ENCODE measurements at regions of chr9 and their contacts with region 1.

Region 1: GRCh38 chr9:31185831-31186230 is 1198.6 kb upstream of the ACO1 start:
- DNase-seq: no peak
- ATAC-seq: no peak
- H3K4me3 Mint-ChIP-seq: no peak overlapping the region
- H3K27ac Mint-ChIP-seq: no peak overlapping the region
- H3K4me1 Mint-ChIP-seq: no peaks in the 10 kb centered on the region
- H3K27me3 Mint-ChIP-seq: no peaks in the 10 kb centered on the region
- CTCF ChIP-seq: no peak

Region 2: DNA sequence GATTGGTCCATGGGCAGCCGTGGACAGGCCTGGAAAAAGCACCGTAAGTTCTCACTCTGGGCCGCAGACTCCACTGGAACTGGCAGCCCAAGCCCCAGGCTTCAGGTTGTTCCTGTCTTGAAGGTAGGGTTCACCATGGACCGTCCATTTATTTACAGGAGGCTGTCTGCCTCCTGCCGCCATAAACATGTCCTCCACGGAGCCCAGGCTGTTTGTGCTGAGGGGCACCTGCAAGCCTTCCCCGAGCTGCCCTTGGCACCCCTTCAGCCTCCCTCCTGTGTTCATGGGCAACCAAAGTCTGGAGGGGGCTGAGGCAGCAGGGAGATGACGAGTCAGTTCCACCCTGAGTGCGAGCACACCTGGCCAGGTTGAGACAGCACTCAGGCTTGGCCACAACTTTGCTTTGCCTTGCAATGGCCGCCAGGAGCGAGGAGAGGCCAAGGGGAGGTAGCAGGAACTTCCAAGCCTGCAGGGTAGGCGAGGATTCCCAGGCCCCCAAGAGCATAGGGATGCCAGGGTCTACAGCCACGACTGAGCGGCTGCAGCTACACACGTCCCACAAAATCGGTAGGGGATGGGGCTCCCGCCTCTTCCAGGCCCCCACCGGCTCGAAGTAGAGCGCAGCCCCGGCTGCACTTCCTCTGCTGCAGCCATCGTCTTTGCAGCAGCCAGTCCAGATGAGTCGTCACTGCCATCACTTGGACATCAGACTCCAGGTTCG is 426.9 kb before region 1 on chr9:
- CTCF ChIA-PET with region 1: no interaction called
- POLR2A ChIA-PET with region 1: no interaction called
- intact Hi-C with region 1: no loop called
- DNase-seq: no peak
- ATAC-seq: no peak
- H3K4me3 Mint-ChIP-seq: no peak overlapping the region
- H3K27ac Mint-ChIP-seq: no peak overlapping the region
- H3K4me1 Mint-ChIP-seq: no peaks in the 10 kb centered on the region
- H3K27me3 Mint-ChIP-seq: no peaks in the 10 kb centered on the region
- CTCF ChIP-seq: no peak

Region 3: DNA sequence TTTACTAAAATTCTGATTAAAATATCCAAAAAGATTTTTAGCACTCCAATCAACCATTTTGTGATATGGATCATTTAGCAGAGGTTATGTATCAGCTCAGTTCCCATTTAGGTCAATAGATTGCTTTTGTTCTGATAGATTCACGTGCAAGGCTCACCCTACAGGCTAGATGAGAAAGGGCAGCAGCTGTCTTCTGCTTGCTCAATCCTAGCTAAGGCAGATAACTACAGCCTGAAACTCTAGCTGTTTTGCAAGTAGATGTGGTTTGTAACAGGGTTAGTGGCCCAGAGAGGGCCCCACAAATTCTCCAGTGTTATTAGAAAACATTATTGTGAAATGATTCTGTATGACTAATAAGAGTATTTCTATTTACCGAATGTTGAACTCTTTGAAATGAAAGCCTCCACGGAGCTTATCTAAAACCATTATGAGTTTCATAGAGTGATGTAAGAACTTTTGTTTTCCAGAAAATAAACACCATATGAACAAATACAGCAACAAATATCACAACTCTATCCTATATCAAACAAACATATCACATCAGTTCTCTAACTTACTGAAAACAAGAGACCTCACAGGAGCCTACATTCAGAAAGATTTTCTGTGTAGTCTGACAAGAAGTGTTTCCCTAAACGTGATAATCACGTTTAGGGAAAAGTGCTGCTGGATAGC is 356.7 kb after region 1 on chr9:
- CTCF ChIA-PET with region 1: no interaction called
- POLR2A ChIA-PET with region 1: no interaction called
- intact Hi-C with region 1: loop called (anchors 10 kb)
- DNase-seq: no peak
- ATAC-seq: peak; percentile 31
- H3K4me3 Mint-ChIP-seq: no peak overlapping the region
- H3K27ac Mint-ChIP-seq: no peak overlapping the region
- H3K4me1 Mint-ChIP-seq: no peaks in the 10 kb centered on the region
- H3K27me3 Mint-ChIP-seq: no peaks in the 10 kb centered on the region
- CTCF ChIP-seq: no peak

Measured in activated B cell treated with CpG ODN at 0.5 μM for 24 hours (primary cell).